Transverse colon (tissue), 4 donors: ENCODE measurements at regions of chr14 and their contacts with region 1.

Region 1: GRCh38 chr14:104078031-104078455 is 7.5 kb upstream of the ASPG start:
- DNase-seq: peak; percentile 92
- H3K4me3 ChIP-seq: no peak overlapping the region
- H3K27ac ChIP-seq: peak overlapping the region in 2 of 4 donors; percentile 12 to 38
- H3K4me1 ChIP-seq: peaks cover 4 to 34% (median 32%) of the 10 kb centered on the region in 4 donors
- H3K27me3 ChIP-seq: no peaks in the 10 kb centered on the region
- CTCF ChIP-seq: peak; percentile 99 to 100 (median 100)
- EP300 ChIP-seq: no peak
- POLR2A ChIP-seq: no peak

Region 2: DNA sequence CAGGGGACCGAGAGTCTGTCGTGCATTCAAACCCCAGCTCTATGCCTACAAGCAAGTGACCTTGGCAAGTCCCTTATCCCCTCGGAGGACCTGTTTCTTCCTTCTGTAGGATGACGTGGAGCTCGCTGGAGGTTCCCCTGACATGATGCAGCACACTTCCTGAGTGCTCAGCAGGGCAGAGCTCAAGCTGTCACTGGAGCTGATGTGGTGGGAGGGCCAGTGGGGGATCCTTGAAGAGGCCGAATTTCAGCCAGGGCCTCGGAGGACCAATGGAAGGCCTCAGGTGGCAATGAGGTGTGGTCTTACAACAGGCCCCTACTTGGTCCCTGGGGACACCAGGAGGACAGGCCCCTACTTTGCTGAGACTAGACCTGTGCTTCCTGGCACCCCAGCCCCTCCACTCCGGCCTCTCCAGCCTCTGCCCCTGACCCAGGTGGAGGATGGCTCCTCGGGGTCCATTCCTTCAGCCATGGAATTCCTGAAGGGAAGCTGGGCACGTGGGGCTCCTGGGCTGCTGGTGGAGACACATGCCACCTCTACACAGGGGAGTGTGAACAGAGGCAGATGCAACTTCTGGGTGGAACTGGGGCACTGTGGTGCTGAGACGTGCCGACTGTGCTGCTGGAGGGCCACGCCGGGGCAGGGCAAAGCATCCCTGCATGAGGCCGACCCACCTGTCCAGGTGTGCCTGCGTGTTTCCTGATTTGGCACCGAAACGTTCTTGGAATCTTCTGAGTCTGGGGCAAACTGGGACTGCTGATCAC is 41.6 kb after region 1 on chr14:
- in situ Hi-C with region 1: loop called in 1 of 4 experiments (anchors 10 kb)
- intact Hi-C with region 1: no loop called
- DNase-seq: peak; percentile 4
- H3K4me3 ChIP-seq: no peak overlapping the region
- H3K27ac ChIP-seq: no peak overlapping the region
- H3K4me1 ChIP-seq: peaks cover 0 to 23% (median 17%) of the 10 kb centered on the region in 4 donors
- H3K27me3 ChIP-seq: peaks cover 44% of the 10 kb centered on the region
- CTCF ChIP-seq: no peak
- EP300 ChIP-seq: no peak
- POLR2A ChIP-seq: no peak

Region 3: DNA sequence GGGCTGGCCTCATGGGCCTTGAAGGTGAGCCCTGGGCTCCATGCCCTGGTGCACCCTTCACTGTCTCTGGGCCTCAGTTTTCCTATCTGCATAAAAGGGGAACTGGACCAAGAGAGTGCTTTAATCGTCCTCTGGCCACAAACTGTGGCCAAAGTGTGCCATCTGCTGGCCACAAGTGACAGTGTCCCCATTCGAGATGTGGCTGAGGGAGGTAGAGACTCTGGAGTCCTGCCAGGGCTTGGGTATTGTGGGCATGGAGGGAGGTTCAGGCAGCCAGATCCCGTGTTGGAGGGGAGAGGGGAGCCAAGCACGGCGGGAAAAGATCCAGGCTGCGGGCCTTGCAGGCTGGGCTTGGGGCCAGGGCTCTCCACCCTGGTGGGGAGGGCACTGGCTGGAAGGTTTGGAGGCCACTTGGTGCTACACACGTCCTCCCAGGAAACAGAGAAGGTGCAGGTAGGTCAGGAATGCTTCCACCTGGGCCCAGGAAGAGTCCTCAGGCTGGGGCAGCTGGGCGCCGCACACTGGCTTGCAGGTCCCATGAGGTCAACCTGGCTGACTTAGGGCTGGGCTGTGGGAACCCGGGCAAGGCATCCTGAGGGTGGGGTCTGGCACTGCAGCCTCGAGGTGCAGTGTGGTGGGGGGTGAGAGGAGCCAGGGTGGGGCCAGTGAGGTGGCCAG is 53.1 kb after region 1 on chr14:
- in situ Hi-C with region 1: loop called in 2 of 4 experiments (anchors 5 to 10 kb)
- intact Hi-C with region 1: no loop called
- DNase-seq: peak; percentile 66
- H3K4me3 ChIP-seq: no peak overlapping the region
- H3K27ac ChIP-seq: no peak overlapping the region
- H3K4me1 ChIP-seq: peaks cover 0 to 11% (median 8%) of the 10 kb centered on the region in 4 donors
- H3K27me3 ChIP-seq: peaks cover 48% of the 10 kb centered on the region
- CTCF ChIP-seq: peak; percentile 46 to 94 (median 63)
- EP300 ChIP-seq: no peak
- POLR2A ChIP-seq: no peak

Region 4: GRCh38 chr14:104150136-104151027 is 72.3 kb after region 1 on chr14:
- in situ Hi-C with region 1: no loop called
- intact Hi-C with region 1: no loop called
- DNase-seq: no peak
- H3K4me3 ChIP-seq: no peak overlapping the region
- H3K27ac ChIP-seq: no peak overlapping the region
- H3K4me1 ChIP-seq: peaks cover 0 to 5% (median 2%) of the 10 kb centered on the region in 4 donors
- H3K27me3 ChIP-seq: no peaks in the 10 kb centered on the region
- CTCF ChIP-seq: no peak
- EP300 ChIP-seq: no peak
- POLR2A ChIP-seq: no peak

Region 5: DNA sequence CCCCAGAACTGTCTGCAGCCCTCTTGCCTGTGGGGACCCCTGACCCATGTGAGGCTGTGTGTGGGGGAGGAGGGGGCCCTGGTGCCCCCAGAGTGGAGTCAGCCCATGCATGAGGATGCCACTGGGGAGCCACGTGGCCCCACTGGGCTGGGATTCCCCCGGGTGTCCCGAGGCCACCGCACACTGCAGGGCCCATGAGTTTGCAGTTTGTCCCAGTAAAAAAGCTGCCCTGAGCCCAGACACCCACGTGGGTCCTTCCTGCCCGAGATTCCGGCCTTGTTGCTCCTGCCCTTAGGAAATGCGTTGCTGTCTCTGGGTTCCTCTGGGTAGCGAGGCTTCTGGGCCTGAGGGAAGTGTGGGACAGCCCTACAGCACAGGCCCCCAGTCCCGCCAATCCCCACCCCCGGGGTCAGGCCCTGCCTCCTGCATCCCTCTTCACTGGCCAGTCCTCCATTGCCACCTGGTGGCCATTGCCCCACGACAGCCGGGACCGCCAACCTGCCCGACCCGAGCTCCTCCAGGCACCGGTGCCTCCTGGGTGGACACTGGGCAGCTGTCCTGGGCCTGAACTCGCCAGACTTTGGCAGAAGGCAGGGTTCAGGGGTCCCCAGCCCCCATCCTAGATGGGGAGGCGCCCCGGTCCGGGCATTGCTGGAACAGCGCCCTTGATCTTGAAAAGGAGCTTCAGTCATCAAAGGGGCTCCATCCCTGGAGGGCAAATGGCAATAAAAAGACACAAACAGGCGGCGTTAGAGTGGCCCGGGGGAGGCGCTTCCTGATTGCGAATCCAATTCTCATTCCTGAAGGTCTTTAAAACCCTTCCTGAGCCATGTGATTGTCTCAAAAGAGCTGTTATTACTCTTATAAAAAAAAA is 485.9 kb after region 1 on chr14:
- in situ Hi-C with region 1: no loop called
- intact Hi-C with region 1: loop called (anchors 5 kb)
- DNase-seq: peak; percentile 71
- H3K4me3 ChIP-seq: no peak overlapping the region
- H3K27ac ChIP-seq: no peak overlapping the region
- H3K4me1 ChIP-seq: peaks cover 0 to 6% (median 0%) of the 10 kb centered on the region in 4 donors
- H3K27me3 ChIP-seq: peaks cover 61% of the 10 kb centered on the region
- CTCF ChIP-seq: peak; percentile 65 to 89 (median 81)
- EP300 ChIP-seq: no peak
- POLR2A ChIP-seq: no peak